Colonic mucosa (tissue), 4 donors: ENCODE measurements at regions of chr3 and their contacts with region 1.

Region 1: GRCh38 chr3:50272911-50273693 is 4.2 kb downstream of the SEMA3B start:
- DNase-seq: peak; percentile 95
- H3K4me3 ChIP-seq: peak overlapping the region; percentile 16
- H3K27ac ChIP-seq: no peak overlapping the region
- H3K4me1 ChIP-seq: peaks cover 21% of the 10 kb centered on the region
- H3K27me3 ChIP-seq: peaks cover 9% of the 10 kb centered on the region
- CTCF ChIP-seq: peak; percentile 94

Region 2: GRCh38 chr3:50192689-50193141 is 80.4 kb before region 1 on chr3:
- intact Hi-C with region 1: loop called (anchors 5 kb)
- DNase-seq: peak; percentile 78
- H3K4me3 ChIP-seq: no peak overlapping the region
- H3K27ac ChIP-seq: no peak overlapping the region
- H3K4me1 ChIP-seq: peaks cover 4% of the 10 kb centered on the region
- H3K27me3 ChIP-seq: peaks cover 17% of the 10 kb centered on the region
- CTCF ChIP-seq: peak; percentile 96

Region 3: DNA sequence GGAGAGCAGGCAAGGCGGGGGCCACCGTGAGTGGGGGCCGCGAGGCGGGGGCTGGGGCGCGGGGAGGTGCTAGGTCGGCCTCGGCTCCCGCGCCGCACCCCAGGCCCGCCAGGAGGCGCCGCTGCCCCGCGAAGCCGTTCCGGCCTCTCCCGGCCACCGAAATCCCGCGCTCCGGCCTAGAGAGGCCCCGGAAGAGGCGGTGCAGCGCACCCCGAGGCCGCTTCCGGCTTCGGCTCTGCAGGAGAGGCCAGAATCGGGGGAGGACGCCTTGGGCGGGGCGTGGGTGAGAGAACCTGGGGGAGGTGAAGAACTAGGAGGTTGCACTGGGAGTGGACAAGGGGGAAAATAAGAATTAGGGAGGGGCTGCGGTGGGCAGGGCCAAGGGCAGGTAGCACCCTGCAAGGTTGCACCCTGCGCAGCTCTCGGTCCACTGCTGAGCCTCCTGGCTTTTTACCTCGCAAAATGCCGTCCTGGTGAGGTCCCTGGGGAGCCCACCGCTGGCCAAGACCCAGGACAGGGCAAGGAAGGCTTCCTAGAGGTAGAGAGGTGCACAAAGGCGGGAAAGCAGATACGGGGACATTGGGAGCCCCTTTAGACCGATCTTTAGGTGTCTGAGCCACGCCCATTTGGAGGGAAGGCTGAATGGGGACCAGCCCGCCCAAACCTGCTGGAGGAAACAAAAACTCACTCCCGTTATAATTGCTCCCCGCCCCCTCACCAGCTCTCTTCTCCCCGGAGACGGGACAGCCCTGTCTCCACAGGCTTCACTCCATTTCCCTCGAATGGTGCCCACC is 45.5 kb before region 1 on chr3:
- intact Hi-C with region 1: loop called (anchors 2 kb)
- DNase-seq: peak; percentile 95
- H3K4me3 ChIP-seq: peak overlapping the region; percentile 82
- H3K27ac ChIP-seq: peak overlapping the region; percentile 85
- H3K4me1 ChIP-seq: peaks cover 4% of the 10 kb centered on the region
- H3K27me3 ChIP-seq: no peaks in the 10 kb centered on the region
- CTCF ChIP-seq: peak; percentile 93

Region 4: DNA sequence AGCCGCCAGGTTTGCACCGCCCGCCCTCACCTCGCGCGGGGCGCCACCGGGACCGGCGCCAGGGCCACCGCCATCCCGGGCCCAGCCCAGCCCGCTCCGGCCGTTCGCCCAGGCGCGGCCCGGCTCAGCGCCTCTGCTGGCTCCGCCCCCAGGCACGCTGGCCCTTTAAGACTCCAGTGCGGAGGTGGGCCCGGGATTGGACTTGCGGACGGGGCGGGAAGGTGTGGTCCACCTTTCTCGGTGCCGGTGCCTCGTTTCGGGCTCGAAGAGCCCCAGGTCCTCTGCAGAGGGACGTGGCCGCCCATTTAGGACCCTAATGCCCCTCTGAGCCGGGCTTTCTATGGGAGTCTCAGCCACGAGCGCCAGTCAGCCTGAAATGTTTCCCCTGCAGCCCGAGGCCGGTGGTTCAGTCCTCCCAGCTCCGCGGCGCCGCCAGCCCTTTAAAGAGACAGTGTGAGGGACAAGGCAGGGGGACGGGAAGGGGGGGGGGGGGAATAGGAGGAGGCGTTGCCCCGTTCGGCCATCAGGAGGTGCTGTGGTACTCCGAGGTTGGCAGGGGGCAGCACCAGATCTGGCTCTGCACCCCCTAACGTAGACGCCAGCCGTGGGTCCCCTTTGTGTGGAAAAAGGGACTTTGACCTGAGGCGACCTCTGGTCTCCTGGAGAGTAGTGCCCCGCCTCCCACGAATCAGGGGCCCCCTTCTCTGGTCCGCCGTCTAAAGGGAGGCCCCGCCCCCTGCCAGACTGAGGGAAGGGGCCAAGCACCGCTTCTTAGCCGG is 48.4 kb after region 1 on chr3:
- intact Hi-C with region 1: loop called (anchors 10 kb)
- DNase-seq: peak; percentile 89
- H3K4me3 ChIP-seq: peak overlapping the region; percentile 66
- H3K27ac ChIP-seq: peak overlapping the region; percentile 81
- H3K4me1 ChIP-seq: peaks cover 34% of the 10 kb centered on the region
- H3K27me3 ChIP-seq: no peaks in the 10 kb centered on the region
- CTCF ChIP-seq: peak; percentile 31